ENCODE measurements at regions of chr4 and their contacts with region 1.

Region 1: DNA sequence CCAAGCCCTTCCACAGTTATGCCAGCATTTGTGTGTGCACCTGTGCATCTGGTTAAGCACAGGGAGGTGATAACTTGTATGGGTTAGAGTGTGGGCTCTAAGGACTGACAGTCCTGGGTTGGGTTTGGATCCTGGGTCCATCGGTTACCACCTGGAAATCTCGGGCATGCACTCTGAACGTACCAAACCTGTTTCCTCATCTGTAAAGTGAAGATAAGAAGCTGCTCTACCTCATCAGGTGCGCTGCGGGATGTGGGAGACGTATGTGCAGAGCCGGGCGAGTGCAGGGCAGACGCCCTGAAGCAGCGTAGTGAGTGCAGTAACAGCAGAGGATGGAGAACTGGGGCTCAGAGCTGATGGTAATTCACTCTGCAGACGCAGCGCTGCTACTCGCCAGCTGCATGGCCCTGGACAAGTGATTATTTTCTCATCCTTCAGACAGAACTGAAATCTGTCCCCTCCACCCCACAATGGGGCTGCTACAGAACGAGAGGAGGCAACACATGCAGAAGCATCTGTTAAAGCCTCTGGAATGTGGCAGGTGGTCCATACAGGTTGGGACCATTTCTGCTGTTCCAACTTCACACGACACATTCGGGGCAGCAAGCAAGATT is 64.4 kb downstream of the HADH start:
- DNase-seq: peak in 28 of 35 experiments; percentile 28 to 72 (median 42)
- ATAC-seq: peak; percentile 53 to 71 (median 54)
- H3K4me3 ChIP-seq: no peak overlapping the region
- H3K4me3 Mint-ChIP-seq: peak overlapping the region in 2 of 3 donors; percentile 28 to 53
- H3K27ac ChIP-seq: peak overlapping the region; percentile 17
- H3K27ac Mint-ChIP-seq: peak overlapping the region; percentile 85 to 98
- H3K4me1 ChIP-seq: peaks cover 62 to 67% of the 10 kb centered on the region in 2 experiments
- H3K4me1 Mint-ChIP-seq: peaks cover 93 to 97% (median 93%) of the 10 kb centered on the region in 3 donors
- H3K27me3 ChIP-seq: no peaks in the 10 kb centered on the region
- H3K27me3 Mint-ChIP-seq: no peaks in the 10 kb centered on the region

Region 2: GRCh38 chr4:107937040-107937785 is 116.9 kb before region 1 on chr4:
- CTCF ChIA-PET with region 1: no interaction called
- POLR2A ChIA-PET with region 1: no interaction called
- DNase-seq: no peak
- ATAC-seq: no peak
- H3K4me3 ChIP-seq: no peak overlapping the region
- H3K4me3 Mint-ChIP-seq: no peak overlapping the region
- H3K27ac ChIP-seq: no peak overlapping the region
- H3K27ac Mint-ChIP-seq: no peak overlapping the region
- H3K4me1 ChIP-seq: peaks cover 5 to 6% of the 10 kb centered on the region in 2 experiments
- H3K4me1 Mint-ChIP-seq: peaks cover 28 to 40% (median 38%) of the 10 kb centered on the region in 3 donors
- H3K27me3 ChIP-seq: no peaks in the 10 kb centered on the region
- H3K27me3 Mint-ChIP-seq: no peaks in the 10 kb centered on the region

Region 3: GRCh38 chr4:108092288-108092687 is 38.2 kb after region 1 on chr4:
- CTCF ChIA-PET with region 1: no interaction called
- POLR2A ChIA-PET with region 1: interaction called in 1 of 2 experiments, 13 read pairs
- DNase-seq: no peak
- ATAC-seq: no peak
- H3K4me3 ChIP-seq: no peak overlapping the region
- H3K4me3 Mint-ChIP-seq: peak overlapping the region; percentile 22 to 31 (median 29)
- H3K27ac ChIP-seq: no peak overlapping the region
- H3K27ac Mint-ChIP-seq: peak overlapping the region; percentile 76 to 79
- H3K4me1 ChIP-seq: peaks cover 34 to 65% of the 10 kb centered on the region in 2 experiments
- H3K4me1 Mint-ChIP-seq: peaks cover 88 to 92% (median 89%) of the 10 kb centered on the region in 3 donors
- H3K27me3 ChIP-seq: no peaks in the 10 kb centered on the region
- H3K27me3 Mint-ChIP-seq: no peaks in the 10 kb centered on the region

Region 4: GRCh38 chr4:108144451-108144850 is 90.3 kb after region 1 on chr4:
- CTCF ChIA-PET with region 1: no interaction called
- POLR2A ChIA-PET with region 1: interaction called in 1 of 2 experiments, 13 read pairs
- DNase-seq: peak in 3 of 35 experiments; percentile 5 to 51 (median 24)
- ATAC-seq: peak; percentile 39 to 42 (median 40)
- H3K4me3 ChIP-seq: peak overlapping the region in 1 of 2 donors; percentile 19
- H3K4me3 Mint-ChIP-seq: peak overlapping the region; percentile 49 to 86 (median 68)
- H3K27ac ChIP-seq: peak overlapping the region; percentile 1
- H3K27ac Mint-ChIP-seq: peak overlapping the region; percentile 67 to 76
- H3K4me1 ChIP-seq: peaks cover 40 to 80% of the 10 kb centered on the region in 2 experiments
- H3K4me1 Mint-ChIP-seq: peaks cover 93 to 96% (median 94%) of the 10 kb centered on the region in 3 donors
- H3K27me3 ChIP-seq: peaks cover 0 to 2% of the 10 kb centered on the region in 2 experiments
- H3K27me3 Mint-ChIP-seq: no peaks in the 10 kb centered on the region

Region 5: DNA sequence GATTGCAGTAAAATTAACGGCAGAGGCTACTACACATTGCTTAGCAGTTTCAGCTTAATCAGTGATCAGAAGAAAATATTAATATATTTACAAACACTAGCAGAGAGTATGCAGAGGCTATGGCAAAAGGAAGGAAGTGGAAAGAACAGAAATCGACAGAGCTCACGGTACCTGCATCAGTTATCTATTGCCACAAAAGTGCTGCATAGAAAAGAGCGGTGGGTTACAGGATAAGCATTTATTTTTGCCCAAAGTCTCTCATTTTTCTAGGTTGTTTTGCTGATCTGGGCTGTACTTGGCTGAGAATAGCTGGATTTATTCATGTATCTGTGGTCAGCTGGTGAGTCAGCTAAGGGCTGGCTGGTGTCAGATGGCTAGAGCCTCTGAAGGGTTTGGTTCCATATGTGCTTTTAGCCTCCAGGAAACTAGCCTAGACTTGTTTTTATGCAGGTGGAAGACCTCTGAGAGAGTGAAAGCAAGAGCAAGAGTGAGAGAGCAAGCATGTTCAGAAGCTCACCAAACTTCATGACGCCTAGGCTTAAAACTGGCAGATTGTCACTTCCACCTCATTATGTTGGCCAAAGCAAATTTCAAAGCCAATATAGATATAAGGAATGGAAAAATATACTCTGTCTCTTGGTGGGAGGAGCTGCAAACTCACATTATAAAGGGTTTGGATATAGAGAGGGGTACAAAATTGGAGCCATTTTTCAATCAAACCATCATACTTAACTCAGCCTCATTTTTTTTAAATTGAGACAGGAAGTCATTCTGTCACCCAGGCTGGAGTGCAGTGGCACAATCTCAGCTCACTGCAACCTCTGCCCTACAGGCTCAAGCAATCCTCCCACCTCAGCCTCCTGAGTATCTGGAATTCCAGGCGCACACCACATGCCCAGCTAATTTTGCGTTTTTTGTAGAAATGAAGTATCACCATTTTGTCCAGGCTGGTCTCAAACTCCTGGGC is 413.1 kb after region 1 on chr4:
- CTCF ChIA-PET with region 1: no interaction called
- POLR2A ChIA-PET with region 1: interaction called in 1 of 2 experiments, 14 read pairs
- DNase-seq: peak in 10 of 35 experiments; percentile 4 to 44 (median 10)
- ATAC-seq: peak; percentile 85 to 90 (median 88)
- H3K4me3 ChIP-seq: peak overlapping the region in 1 of 2 donors; percentile 6
- H3K4me3 Mint-ChIP-seq: peak overlapping the region; percentile 65 to 70 (median 68)
- H3K27ac ChIP-seq: peak overlapping the region; percentile 51
- H3K27ac Mint-ChIP-seq: peak overlapping the region; percentile 95 to 98
- H3K4me1 ChIP-seq: peaks cover 22 to 37% of the 10 kb centered on the region in 2 experiments
- H3K4me1 Mint-ChIP-seq: peaks cover 38 to 55% (median 45%) of the 10 kb centered on the region in 3 donors
- H3K27me3 ChIP-seq: peaks cover 0 to 4% of the 10 kb centered on the region in 2 experiments
- H3K27me3 Mint-ChIP-seq: no peaks in the 10 kb centered on the region

Measured in T-cell (primary cell).